Dendritic cell treated with granulocyte-macrophage colony-stimulating factor and Interleukin-4, amounts not matched to agents 40 ng/mL and 50 ng/mL, for 4 days (primary cell): ENCODE measurements at regions of chr10 and their contacts with region 1.

Region 1: GRCh38 chr10:107011105-107011504 is 153.4 kb downstream of the SORCS1 start:
- H3K4me3 Mint-ChIP-seq: no peak overlapping the region
- H3K27ac Mint-ChIP-seq: no peak overlapping the region
- H3K4me1 Mint-ChIP-seq: peaks cover 8% of the 10 kb centered on the region
- H3K27me3 Mint-ChIP-seq: peaks cover 2% of the 10 kb centered on the region

Region 2: DNA sequence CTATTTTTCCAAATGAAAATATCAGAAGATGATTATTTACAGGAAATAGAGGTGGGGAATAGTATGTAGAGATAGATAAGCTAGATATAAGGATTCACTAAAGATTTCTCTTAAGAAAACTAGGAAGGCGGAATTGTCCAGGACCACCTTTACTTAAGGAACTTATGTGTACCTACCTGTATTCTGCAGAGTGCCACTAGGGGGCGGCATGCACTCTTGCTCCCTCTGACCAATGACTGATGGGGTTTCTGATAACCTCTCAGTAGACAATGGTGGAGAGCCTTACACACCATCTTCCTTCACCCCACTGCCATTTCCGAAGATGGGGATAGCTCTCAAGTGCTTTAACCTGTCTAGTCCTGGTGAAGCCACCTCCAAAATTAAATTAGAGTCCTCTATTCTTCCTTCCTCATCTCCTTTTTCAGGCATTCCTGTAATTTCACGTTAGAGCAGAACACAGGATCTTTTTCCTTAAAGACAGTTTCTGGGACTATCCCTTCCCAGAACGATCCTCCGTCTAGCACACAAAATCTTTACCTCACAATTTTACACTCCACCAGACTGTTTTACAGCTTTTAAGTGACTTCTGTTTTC is 299.7 kb before region 1 on chr10:
- intact Hi-C with region 1: loop called (anchors 2 kb)
- H3K4me3 Mint-ChIP-seq: no peak overlapping the region
- H3K27ac Mint-ChIP-seq: no peak overlapping the region
- H3K4me1 Mint-ChIP-seq: no peaks in the 10 kb centered on the region
- H3K27me3 Mint-ChIP-seq: no peaks in the 10 kb centered on the region

Region 3: DNA sequence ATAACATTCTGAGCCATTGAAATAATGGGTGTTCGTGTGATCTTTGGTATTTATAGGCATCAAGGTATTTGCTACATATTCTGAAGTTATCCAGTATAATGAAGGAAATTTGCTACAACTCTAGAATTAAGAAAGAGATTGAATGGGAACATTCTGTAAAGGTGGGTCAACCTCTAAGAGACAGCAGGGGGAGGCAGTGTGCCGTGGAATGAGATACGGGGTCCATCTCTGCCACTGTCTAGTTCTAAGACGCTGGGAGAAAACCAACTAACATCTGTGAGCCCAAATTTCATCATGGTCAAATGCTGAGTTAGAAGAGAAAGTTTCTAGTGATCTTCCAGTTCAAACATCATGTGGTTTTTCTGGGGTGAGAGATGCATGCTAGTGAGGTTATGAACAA is 215.5 kb before region 1 on chr10:
- intact Hi-C with region 1: loop called (anchors 1 kb)
- H3K4me3 Mint-ChIP-seq: no peak overlapping the region
- H3K27ac Mint-ChIP-seq: no peak overlapping the region
- H3K4me1 Mint-ChIP-seq: peaks cover 9% of the 10 kb centered on the region
- H3K27me3 Mint-ChIP-seq: peaks cover 4% of the 10 kb centered on the region

Region 4: DNA sequence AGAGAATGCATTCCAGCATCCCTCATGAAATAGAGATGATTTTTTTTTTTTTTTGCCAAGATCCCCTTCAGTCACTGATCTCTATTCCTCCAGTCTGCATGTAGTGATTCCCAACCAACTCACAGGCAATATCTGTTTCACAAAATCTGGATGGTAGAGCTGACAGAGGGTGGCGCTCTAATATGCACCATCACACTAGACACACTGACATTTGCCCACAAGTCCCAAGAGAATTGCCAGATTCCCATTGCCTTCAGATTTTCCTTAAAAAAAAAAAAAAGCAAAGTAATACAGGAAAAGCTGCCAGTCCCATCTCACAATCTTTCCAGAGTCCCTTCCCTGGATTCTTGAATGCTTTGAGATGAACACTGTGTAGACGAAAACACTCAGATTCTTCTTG is 147.6 kb before region 1 on chr10:
- intact Hi-C with region 1: loop called (anchors 5 kb)
- H3K4me3 Mint-ChIP-seq: no peak overlapping the region
- H3K27ac Mint-ChIP-seq: no peak overlapping the region
- H3K4me1 Mint-ChIP-seq: peaks cover 13% of the 10 kb centered on the region
- H3K27me3 Mint-ChIP-seq: peaks cover 4% of the 10 kb centered on the region

Region 5: DNA sequence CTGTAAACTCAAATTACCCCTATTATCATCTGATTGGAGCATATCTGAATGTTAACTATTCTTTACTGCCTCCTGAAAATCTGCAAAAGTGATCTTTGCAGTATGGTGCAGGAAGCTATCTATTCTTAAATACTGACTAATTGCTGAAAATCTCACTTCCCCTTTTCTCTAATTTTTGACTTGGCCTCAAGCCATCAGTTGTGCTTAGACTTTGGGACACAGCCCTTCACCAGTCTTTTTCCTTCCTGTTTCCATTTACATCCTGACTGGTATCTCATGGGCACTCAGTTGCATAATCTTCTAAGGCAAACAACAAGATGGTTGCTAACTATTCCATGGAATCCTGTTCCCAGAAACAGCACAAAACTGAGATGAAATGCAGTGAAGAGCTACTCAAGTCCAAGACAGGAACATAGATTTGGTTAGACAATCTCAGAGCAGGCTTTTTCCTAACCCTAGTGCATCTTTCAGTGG is 75.1 kb before region 1 on chr10:
- intact Hi-C with region 1: no loop called
- H3K4me3 Mint-ChIP-seq: no peak overlapping the region
- H3K27ac Mint-ChIP-seq: peak overlapping the region; percentile 55
- H3K4me1 Mint-ChIP-seq: peaks cover 49% of the 10 kb centered on the region
- H3K27me3 Mint-ChIP-seq: no peaks in the 10 kb centered on the region

Region 6: GRCh38 chr10:107814865-107815487 is 803.9 kb after region 1 on chr10:
- intact Hi-C with region 1: loop called (anchors 10 kb)
- H3K4me3 Mint-ChIP-seq: no peak overlapping the region
- H3K27ac Mint-ChIP-seq: no peak overlapping the region
- H3K4me1 Mint-ChIP-seq: no peaks in the 10 kb centered on the region
- H3K27me3 Mint-ChIP-seq: no peaks in the 10 kb centered on the region